ENCODE measurements at regions of chr1 and their contacts with region 1.

Region 1: DNA sequence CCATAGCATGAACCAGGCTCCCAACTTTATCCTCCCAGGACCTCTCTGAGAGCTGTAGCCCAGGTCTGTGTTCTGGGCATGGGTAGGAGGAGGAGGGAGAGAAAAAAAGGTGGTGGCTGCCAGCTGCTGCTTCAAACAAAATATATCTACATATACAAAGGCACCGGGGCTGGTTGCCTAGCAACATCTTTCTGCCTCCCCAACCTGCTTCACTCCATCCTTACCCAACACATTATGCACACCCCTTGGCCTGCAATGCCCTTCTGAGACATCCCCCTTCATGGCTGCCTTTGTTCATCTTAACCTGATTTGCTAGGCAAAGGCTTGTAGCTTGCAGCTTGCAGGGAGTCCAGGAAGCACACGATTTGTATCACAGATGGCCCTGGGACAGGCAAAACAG is 27.2 kb upstream of the ATP1A1 start:
- DNase-seq: no peak
- ATAC-seq: no peak
- H3K4me3 ChIP-seq: no peak overlapping the region
- H3K27ac ChIP-seq: no peak overlapping the region
- H3K4me1 ChIP-seq: no peaks in the 10 kb centered on the region
- H3K27me3 ChIP-seq: peaks cover 0 to 3% of the 10 kb centered on the region in 2 donors

Region 2: DNA sequence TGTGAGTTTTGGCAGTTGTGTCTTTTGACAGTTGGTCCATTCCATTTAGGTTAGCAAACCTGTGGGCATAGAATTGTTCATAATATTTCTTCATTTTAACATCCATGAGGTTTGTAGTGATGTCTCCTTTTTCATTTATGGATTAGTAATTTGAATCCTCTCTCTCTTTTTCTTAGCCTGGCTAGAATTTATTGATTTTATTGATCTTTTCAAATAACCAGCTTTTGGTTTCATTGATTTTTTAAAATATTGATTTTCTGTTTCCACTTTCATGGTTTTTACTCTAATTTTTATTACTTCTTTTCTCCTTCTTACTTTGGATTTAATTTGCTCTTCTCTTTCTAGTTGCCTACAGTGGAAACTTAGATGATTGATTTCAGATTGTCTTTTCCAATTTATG is 1477.1 kb before region 1 on chr1:
- intact Hi-C with region 1: no loop called
- DNase-seq: no peak
- ATAC-seq: no peak
- H3K4me3 ChIP-seq: no peak overlapping the region
- H3K27ac ChIP-seq: no peak overlapping the region
- H3K4me1 ChIP-seq: no peaks in the 10 kb centered on the region
- H3K27me3 ChIP-seq: no peaks in the 10 kb centered on the region

Region 3: DNA sequence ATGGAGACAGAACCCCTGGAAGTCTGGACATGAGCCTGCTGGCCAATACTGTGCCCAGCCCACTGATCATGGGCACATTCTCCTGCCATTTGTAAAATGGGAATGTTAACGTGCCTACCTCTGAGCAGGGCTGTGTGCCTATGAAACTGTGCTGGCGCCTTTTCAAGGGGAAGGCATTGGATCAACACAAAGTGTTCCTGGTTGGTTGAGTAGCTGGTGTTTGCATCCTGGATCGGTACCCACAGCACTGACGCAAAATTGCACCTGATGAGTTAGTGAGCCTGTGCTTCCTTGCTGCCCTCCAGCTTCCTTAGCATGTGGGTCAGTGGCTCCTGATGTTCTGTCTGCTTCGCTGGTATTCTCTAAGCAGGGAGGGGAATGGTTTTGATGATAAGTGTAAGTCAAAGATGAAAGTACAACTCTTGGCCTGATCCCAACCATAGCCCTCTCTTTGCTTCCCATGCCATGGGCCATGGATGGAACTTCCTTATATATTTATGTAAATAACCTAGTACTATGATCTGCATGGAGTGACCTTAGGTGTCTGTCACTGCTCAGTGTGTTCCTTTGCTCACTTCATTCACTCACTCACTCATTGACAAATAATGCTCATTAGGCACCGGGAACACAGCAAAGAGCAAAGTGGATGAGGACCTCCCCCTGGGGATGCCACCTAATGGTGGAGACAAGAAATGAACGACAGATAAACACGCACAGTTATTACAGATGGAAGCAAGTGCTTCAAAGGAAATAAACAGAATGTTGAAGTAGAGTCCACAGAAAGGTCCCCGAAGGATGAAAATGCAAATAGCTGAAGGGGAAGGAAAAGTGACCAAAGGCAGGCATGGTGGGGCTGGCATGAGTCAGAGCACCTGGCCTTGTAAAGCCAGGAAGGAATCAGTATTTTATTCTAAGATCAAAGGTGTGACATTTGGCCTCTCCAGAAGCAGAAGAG is 211.9 kb before region 1 on chr1:
- intact Hi-C with region 1: loop called in 1 of 2 experiments (anchors 10 kb)
- DNase-seq: no peak
- ATAC-seq: no peak
- H3K4me3 ChIP-seq: no peak overlapping the region
- H3K27ac ChIP-seq: no peak overlapping the region
- H3K4me1 ChIP-seq: no peaks in the 10 kb centered on the region
- H3K27me3 ChIP-seq: no peaks in the 10 kb centered on the region

Region 4: GRCh38 chr1:116377541-116378529 is 32.0 kb after region 1 on chr1:
- intact Hi-C with region 1: no loop called
- DNase-seq: peak; percentile 74 to 82
- ATAC-seq: peak; percentile 75
- H3K4me3 ChIP-seq: no peak overlapping the region
- H3K27ac ChIP-seq: peak overlapping the region; percentile 92 to 94
- H3K4me1 ChIP-seq: peaks cover 0 to 15% of the 10 kb centered on the region in 2 donors
- H3K27me3 ChIP-seq: no peaks in the 10 kb centered on the region

Region 5: DNA sequence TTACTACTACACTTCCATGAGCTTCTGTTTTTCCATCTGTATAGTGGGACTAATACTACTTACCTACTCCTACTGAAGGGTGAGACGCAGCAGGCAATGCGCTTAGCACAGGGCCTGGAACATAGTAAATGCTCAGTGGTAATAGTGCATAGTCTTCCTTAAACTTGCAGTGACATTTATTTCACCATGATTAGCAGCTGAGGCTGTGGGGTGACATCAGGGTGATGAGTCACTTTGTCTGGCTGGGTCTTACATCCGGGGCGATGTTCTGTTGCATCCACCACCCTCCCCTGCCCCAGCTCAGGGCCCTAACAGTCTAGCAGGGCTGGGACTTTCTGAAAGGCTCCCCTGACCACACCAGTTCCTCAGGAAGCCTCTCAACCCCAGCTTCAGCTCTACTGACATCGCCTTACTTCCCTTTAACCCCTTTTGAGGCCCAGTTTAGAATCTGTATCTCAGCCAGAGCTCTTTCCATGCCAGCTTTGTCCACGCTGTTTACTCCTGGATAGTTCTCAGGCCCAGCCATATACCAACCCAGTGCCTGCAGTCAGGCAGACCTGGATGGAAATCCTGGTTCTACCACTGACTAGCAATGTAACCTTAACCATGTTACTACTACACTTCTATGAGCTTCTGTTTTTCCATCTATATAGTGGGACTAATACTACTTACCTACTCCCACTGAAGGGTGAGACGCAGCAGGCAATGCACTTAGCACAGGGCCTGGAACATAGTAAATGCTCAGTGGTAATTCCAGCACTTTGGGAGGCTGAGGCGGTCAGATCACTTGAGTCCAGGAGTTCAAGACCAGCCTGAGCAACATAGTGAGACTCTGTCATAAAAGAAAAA is 158.7 kb after region 1 on chr1:
- intact Hi-C with region 1: no loop called
- DNase-seq: peak in 1 of 2 donors; percentile 92
- ATAC-seq: peak; percentile 80
- H3K4me3 ChIP-seq: no peak overlapping the region
- H3K27ac ChIP-seq: peak overlapping the region in 1 of 2 donors; percentile 22
- H3K4me1 ChIP-seq: peaks cover 0 to 2% of the 10 kb centered on the region in 2 donors
- H3K27me3 ChIP-seq: no peaks in the 10 kb centered on the region

Region 6: DNA sequence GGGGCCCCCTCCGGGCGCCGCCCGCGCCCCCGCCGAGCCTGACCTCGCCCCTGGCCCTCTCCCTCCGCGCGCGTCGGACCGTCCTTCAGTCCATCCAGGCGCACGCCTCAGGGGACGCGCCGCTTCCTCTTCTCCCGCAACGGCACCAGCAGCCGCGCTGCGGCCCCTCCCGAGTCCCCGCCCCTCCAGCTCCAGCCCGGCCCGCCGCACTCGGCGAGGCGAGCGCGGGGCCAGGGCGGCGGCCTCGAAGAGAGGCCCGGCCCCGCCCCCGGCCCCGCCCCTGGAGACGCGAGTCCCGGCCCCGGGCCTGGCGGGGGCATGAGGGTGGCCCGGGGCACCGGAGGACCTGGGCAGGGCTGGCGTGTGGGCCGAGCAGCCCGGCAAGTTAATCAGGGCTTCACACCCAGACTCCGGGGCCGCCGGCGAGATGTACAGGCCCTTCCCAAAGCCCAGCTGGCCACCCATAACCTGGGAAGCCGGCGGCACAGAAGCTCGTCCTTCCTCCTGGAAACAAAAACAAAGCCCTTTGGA is 321.8 kb after region 1 on chr1 and contains the start of gene IGSF3:
- intact Hi-C with region 1: no loop called
- DNase-seq: peak; percentile 77 to 89
- ATAC-seq: peak; percentile 81
- H3K4me3 ChIP-seq: peak within 1 kb of the TSS; percentile 89 to 91
- H3K27ac ChIP-seq: no peak within 1 kb of the TSS
- H3K4me1 ChIP-seq: no peaks in the 10 kb centered on the region
- H3K27me3 ChIP-seq: no peaks in the 10 kb centered on the region
- total RNA-seq, gene IGSF3: 1.5 to 5.9 TPM

Measured in aorta (tissue), 5 donors.